OCI-LY7 (cell line): ENCODE measurements at regions of chr7 and their contacts with region 1.

Region 1: GRCh38 chr7:91940572-91941341 is at the start of gene AKAP9:
- DNase-seq: peak; percentile 91
- H3K4me3 ChIP-seq: peak within 1 kb of the TSS; percentile 93
- H3K27ac ChIP-seq: peak within 1 kb of the TSS; percentile 74
- H3K4me1 ChIP-seq: peaks cover 21% of the 10 kb centered on the region
- CTCF ChIP-seq: no peak
- total RNA-seq, gene AKAP9: 32.6 and 48.7 TPM in 2 replicates

Region 2: DNA sequence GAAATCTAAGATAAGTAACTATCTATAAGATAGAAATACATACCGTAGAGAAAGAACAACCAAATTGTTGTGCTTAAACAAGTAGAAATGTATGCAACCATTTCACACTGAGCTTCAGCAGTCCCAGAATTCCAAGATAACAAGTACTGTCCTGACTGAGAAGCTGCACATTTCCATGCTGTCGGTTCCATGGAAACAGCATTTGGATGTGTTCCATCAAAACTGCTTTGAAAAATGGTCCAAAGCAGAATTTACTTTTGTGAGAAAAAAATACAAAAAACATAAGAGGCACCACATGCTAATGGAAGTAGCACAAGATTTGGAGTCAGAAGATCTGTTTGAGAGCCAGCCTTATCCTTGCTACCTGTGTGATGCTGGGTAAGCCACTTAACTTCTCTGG is 152.8 kb before region 1 on chr7:
- CTCF ChIA-PET with region 1: no interaction called
- POLR2A ChIA-PET with region 1: no interaction called
- intact Hi-C with region 1: no loop called
- DNase-seq: no peak
- H3K4me3 ChIP-seq: no peak overlapping the region
- H3K27ac ChIP-seq: no peak overlapping the region
- H3K4me1 ChIP-seq: no peaks in the 10 kb centered on the region
- CTCF ChIP-seq: no peak

Region 3: DNA sequence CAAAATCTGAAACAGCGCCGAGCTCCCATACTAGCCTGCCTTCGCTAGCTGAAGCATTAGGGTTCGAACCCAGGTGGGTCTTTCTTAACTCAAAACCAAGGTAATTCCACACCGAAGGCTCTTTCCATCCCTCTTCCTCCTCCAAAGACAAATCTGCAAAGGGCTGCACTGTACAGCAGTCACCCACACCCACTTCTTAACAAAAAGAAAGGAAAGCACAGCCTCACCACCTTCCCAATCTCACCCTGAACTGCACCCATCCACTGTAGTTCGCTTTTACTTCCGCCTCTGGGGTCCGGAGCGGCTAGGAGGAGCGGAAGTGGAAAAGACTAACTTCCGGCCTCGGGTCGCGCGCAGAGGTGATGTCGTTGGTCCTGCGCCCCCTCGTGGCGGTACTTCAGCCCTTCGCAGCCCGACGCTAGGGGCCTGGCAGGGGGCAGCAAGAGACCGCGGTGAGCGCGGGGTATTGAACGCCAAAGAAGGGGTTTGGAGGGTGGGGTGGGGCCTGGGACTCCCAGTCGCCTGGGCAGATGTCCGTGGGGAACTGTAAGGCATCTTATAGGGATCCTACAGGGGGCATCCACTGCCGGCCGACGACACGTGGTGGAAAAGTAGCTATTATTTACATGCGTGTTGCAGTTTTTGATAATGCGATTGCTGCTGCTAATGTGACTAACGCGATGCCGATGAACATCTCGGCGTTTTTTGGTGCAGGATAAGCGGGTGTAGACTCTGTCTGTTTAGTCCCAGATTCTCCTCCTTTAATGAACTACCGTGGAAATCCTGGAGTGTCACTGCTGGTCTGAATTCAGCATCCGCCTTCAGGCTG is 60.1 kb before region 1 on chr7 and contains the start of gene MTERF1:
- CTCF ChIA-PET with region 1: interaction called, 3 read pairs
- POLR2A ChIA-PET with region 1: interaction called, 8 read pairs
- intact Hi-C with region 1: loop called (anchors 1 kb)
- DNase-seq: peak; percentile 95
- H3K4me3 ChIP-seq: peak within 1 kb of the TSS; percentile 86
- H3K27ac ChIP-seq: peak within 1 kb of the TSS; percentile 21
- H3K4me1 ChIP-seq: peaks cover 11% of the 10 kb centered on the region
- CTCF ChIP-seq: peak; percentile 97
- total RNA-seq, gene MTERF1: 12.6 and 16.1 TPM in 2 replicates

Region 4: GRCh38 chr7:91995391-91996105 is 54.8 kb after region 1 on chr7:
- CTCF ChIA-PET with region 1: no interaction called
- POLR2A ChIA-PET with region 1: interaction called, 10 read pairs
- intact Hi-C with region 1: no loop called
- DNase-seq: peak; percentile 12
- H3K4me3 ChIP-seq: no peak overlapping the region
- H3K27ac ChIP-seq: peak overlapping the region; percentile 10
- H3K4me1 ChIP-seq: peaks cover 11% of the 10 kb centered on the region
- CTCF ChIP-seq: no peak

Region 5: DNA sequence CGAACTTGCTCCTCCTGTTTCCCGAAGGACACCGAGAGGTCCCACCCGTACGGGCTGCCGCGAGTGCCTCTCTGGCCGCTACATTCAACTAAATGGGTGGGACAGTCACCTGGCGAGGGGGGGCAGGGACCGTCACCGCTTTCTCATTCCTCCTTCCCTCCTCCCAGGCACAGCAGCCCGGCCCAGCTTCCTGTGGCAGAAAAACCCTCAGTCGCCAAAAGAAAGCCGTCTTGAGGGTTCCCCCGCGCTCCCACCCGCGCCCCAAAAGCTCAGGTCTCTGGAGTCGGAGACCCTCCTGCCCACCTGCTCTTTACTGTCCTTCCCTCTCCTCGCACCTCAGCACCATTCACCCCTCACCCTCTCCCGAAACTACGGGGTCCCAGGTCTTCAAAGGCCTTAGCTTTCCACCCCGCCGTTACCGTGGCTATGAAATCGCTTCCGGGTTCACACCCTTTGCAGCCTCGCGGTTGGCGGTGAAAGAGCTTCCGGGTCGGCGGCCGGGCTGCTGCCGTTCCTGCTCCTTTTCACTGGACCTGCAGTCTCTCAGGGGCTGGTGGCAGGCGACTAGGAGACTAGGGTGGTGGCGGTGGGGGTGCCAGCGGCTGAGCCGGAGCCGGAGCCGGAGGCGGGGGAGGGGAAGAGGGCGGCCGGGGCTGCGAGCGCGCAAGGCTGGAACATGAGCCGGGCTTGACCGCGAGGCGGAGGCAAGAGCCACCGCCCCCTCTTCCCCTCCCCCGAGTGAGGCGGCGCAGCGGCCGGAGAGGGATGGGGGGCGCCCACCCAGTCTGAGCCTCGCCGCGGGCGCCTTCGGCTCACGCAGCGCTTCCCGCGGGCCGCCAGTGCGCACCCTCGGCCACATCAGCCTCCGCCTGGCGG is 305.0 kb after region 1 on chr7 and contains the starts of genes ANKIB1 and KRIT1:
- CTCF ChIA-PET with region 1: no interaction called
- POLR2A ChIA-PET with region 1: interaction called, 4 read pairs
- intact Hi-C with region 1: loop called (anchors 10 kb)
- DNase-seq: peak; percentile 92
- H3K4me3 ChIP-seq: peak within 1 kb of the TSS; percentile 89
- H3K27ac ChIP-seq: peak within 1 kb of the TSS; percentile 76
- H3K4me1 ChIP-seq: peaks cover 23% of the 10 kb centered on the region
- CTCF ChIP-seq: peak; percentile 27; the same call in 1 of the 2 replicates
- total RNA-seq, gene ANKIB1: 15.4 and 25.3 TPM in 2 replicates
- total RNA-seq, gene KRIT1: 35.7 and 50.0 TPM in 2 replicates

Region 6: GRCh38 chr7:92528188-92528957 is 587.6 kb after region 1 on chr7 and contains the starts of genes PEX1 and RBM48:
- CTCF ChIA-PET with region 1: no interaction called
- POLR2A ChIA-PET with region 1: interaction called, 3 read pairs
- intact Hi-C with region 1: loop called (anchors 2 kb)
- DNase-seq: peak; percentile 99
- H3K4me3 ChIP-seq: peak within 1 kb of the TSS; percentile 84
- H3K27ac ChIP-seq: peak within 1 kb of the TSS; percentile 81
- H3K4me1 ChIP-seq: peaks cover 14% of the 10 kb centered on the region
- CTCF ChIP-seq: peak; percentile 78
- total RNA-seq, gene PEX1: 28.3 and 28.7 TPM in 2 replicates
- total RNA-seq, gene RBM48: 7.7 and 10.7 TPM in 2 replicates